ENCODE measurements at regions of chr17 and their contacts with region 1.

Region 1: DNA sequence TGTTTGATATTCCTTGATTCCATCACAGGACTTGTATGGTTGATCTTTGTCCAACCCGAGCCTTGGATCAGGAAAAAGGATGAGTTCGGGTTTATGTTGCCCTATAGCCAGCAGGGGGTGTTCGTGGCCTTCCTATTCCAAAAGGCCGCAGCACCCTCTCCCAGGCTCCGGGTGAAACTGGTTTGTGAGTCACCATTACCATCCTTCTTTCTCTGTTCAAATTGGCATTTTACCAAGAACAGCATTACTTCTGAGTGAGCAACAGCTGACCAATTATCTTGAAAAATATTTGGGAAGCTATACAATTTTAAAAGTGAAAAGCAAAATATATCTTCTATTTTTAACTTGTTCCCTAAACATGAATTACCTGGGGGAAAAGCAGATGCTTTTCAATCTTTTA is 24.3 kb upstream of the KRT20 start:
- DNase-seq: peak; percentile 27
- H3K4me3 ChIP-seq: no peak overlapping the region
- H3K27ac ChIP-seq: peak overlapping the region; percentile 58 to 86 (median 70)
- H3K4me1 ChIP-seq: peaks cover 8 to 40% (median 12%) of the 10 kb centered on the region in 3 donors
- H3K27me3 ChIP-seq: peaks cover 0 to 15% (median 0%) of the 10 kb centered on the region in 4 donors
- CTCF ChIP-seq: peak; percentile 49 to 91 (median 86)
- POLR2A ChIP-seq: no peak

Region 2: GRCh38 chr17:41322094-41322902 is 412.9 kb after region 1 on chr17:
- intact Hi-C with region 1: loop called (anchors 5 kb)
- DNase-seq: no peak
- H3K4me3 ChIP-seq: no peak overlapping the region
- H3K27ac ChIP-seq: no peak overlapping the region
- H3K4me1 ChIP-seq: peaks cover 0 to 24% (median 0%) of the 10 kb centered on the region in 3 donors
- H3K27me3 ChIP-seq: no peaks in the 10 kb centered on the region
- CTCF ChIP-seq: peak in 5 of 6 experiments; percentile 76 to 91 (median 86)
- POLR2A ChIP-seq: no peak